CD4-positive, alpha-beta memory T cell (primary cell): ENCODE measurements at regions of chr22 and their contacts with region 1.

Region 1: DNA sequence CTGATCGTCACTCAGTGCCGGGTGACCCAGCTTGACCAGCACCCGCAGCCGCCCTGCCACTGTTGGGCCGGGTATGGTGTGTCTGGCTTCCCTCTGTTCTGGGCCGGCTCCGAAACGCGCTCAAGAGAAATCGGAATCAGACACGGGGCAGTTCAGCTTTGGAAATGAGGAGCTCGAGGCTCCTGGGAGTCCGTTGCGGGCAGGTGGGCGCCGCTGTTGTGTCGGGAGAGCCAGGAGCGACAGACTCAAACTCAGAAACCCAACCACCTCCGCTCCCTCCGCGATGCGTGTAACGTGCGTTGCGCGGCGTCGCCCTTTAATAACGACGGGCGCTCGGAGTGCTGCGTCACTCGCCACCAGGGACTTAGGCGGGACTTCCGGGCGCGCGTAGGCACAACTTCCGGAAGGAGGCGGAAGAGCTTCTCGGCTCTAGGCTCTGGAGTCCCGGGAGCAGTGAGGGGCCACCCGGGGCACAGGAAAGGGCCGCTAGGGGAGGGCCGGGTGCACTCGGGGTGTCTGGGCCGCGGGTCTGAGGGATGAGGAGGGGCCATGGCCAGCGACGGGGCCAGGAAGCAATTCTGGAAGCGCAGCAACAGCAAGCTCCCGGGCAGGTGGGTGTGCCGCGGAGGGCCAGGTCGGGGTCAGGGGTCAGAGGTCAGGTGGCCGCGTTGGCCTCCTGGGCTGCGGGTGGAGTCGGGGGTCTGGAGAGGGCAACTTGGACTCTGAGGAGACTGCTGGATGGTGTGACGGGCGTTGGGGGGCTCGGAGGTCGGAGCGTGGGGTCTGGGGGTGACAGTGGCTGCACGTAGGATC is at the start of gene TBC1D22A:
- DNase-seq: peak; percentile 91 to 94 (median 93)
- H3K4me3 ChIP-seq: peak within 1 kb of the TSS; percentile 94 to 96
- H3K4me3 Mint-ChIP-seq: peak within 1 kb of the TSS; percentile 98 to 100 (median 99)
- H3K27ac ChIP-seq: peak within 1 kb of the TSS; percentile 99
- H3K27ac Mint-ChIP-seq: peak within 1 kb of the TSS; percentile 99 to 100 (median 100)
- H3K4me1 ChIP-seq: peaks cover 51% of the 10 kb centered on the region
- H3K4me1 Mint-ChIP-seq: peaks cover 38 to 76% (median 53%) of the 10 kb centered on the region in 4 donors
- H3K27me3 ChIP-seq: no peaks in the 10 kb centered on the region
- H3K27me3 Mint-ChIP-seq: no peaks in the 10 kb centered on the region
- total RNA-seq, gene TBC1D22A: 49.0 to 49.2 TPM

Region 2: DNA sequence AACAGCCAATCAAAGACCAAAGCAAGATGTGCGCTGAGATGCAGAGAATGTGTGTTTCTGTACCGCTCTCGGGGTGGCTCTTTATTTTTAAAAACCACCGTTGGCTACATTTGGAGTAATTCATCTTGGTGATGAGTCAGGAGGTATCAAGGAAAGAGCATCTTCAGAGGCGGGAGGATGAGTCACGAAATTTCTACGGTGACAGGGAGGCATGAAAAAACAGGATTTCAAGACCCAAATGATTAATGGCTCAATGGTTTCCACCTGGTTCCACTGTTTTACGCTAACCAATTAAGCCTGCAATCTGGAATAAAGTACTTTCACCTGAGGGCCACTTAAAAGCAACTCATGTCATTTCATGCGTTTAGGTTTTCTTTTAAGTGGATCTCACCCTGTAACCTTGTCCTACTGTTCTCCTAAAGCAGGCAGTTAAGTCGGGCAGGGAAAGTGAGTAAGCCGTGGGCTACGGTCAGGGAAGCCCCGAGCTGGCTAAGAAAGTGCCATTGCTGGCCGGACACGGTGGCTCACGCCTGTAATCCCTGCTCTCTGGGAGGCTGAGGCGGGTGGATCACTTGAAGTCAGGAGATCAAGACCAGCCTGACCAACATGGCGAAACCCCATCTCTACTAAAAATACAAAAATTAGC is 299.6 kb before region 1 on chr22:
- CTCF ChIA-PET with region 1: no interaction called
- POLR2A ChIA-PET with region 1: no interaction called
- intact Hi-C with region 1: no loop called
- DNase-seq: no peak
- H3K4me3 ChIP-seq: no peak overlapping the region
- H3K4me3 Mint-ChIP-seq: no peak overlapping the region
- H3K27ac ChIP-seq: no peak overlapping the region
- H3K27ac Mint-ChIP-seq: peak overlapping the region in 1 of 7 donors; percentile 44
- H3K4me1 ChIP-seq: no peaks in the 10 kb centered on the region
- H3K4me1 Mint-ChIP-seq: no peaks in the 10 kb centered on the region
- H3K27me3 ChIP-seq: no peaks in the 10 kb centered on the region
- H3K27me3 Mint-ChIP-seq: peaks cover 3 to 6% of the 10 kb centered on the region in 2 donors

Region 3: DNA sequence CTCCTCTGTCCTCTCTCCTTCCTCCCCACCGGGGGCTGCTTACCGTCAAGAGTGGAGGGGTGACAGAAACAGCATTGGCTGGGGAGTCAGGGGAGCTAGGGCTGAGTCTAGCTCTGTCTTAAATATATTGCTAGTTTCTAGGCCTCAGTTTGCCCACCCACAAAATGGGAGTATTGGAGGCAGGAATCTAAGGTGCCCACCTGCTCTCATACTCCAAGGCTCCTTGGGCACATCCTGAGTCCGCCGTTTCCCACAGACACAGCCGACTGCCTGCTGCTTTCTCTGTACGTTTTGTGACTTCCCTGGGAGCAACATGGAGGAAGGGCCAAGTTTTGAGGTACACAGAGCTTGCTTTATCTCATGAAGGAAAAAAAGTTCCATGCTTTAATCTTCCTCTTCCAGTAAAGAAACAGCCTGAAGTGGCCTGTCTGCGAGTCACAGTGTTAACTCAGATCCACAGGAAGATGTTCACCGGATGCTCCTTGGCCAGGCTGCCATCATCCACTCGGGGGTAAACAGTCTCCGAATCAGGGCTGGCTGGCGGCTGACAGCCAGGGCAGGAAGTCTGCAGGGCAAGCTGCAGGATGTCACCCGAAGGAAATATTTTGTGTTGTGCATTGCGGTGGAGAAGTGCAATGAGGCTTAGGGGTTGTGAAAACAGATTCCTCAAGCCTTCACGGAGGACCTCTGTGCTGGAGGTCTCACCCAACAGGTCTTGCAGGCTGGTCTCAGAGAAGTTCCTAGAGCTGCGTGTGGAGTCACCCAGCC is 13.4 kb before region 1 on chr22:
- CTCF ChIA-PET with region 1: interaction called, 61 read pairs
- POLR2A ChIA-PET with region 1: interaction called, 100 read pairs
- intact Hi-C with region 1: no loop called
- DNase-seq: peak; percentile 68 to 82 (median 71)
- H3K4me3 ChIP-seq: peak overlapping the region; percentile 23 to 39
- H3K4me3 Mint-ChIP-seq: peak overlapping the region; percentile 75 to 89 (median 82)
- H3K27ac ChIP-seq: peak overlapping the region; percentile 56
- H3K27ac Mint-ChIP-seq: peak overlapping the region; percentile 96 to 99 (median 96)
- H3K4me1 ChIP-seq: peaks cover 37% of the 10 kb centered on the region
- H3K4me1 Mint-ChIP-seq: peaks cover 17 to 26% (median 23%) of the 10 kb centered on the region in 4 donors
- H3K27me3 ChIP-seq: no peaks in the 10 kb centered on the region
- H3K27me3 Mint-ChIP-seq: no peaks in the 10 kb centered on the region

Region 4: DNA sequence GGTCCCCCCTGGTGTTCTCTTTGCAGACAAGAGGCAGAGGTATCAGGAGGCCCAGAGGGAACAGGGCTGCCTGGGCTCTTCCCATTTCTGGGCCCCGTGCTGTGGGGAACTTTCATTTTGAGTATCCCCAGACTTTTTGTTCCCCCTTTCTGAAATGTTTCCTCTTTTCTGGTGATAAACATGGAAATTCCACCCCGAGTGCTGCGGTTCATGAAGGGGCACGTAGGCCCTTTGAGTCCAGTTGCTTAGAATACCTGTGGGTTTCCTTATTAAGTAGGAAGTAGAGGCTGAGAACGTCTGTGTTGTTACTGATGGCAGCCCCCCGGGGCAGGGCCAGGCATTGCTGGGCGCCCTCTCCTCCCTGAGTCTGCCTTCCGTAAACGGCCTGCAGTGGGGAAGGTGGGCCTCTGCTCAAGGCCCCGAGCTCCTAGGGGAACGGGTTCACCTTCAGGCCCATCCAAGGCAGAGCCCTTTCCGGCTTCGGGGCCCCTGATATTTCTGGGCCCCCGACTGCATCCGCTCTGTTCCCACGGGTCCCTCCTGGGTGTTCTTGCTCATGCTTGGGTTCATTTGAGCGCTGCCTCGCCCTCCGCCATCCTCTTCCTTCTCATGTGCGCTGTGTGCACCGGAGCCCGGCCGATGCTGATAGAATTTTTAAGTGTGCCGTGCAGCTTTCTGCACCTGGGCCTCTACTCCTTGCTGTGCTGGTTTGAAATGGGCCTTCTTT is 12.0 kb after region 1 on chr22:
- CTCF ChIA-PET with region 1: interaction called, 19 read pairs
- POLR2A ChIA-PET with region 1: interaction called, 51 read pairs
- intact Hi-C with region 1: no loop called
- DNase-seq: peak in 3 of 5 donors; percentile 34 to 50 (median 34)
- H3K4me3 ChIP-seq: peak overlapping the region in 1 of 2 donors; percentile 32
- H3K4me3 Mint-ChIP-seq: peak overlapping the region; percentile 62 to 87 (median 76)
- H3K27ac ChIP-seq: peak overlapping the region; percentile 73
- H3K27ac Mint-ChIP-seq: peak overlapping the region; percentile 91 to 98 (median 93)
- H3K4me1 ChIP-seq: peaks cover 80% of the 10 kb centered on the region
- H3K4me1 Mint-ChIP-seq: peaks cover 57 to 83% (median 74%) of the 10 kb centered on the region in 4 donors
- H3K27me3 ChIP-seq: no peaks in the 10 kb centered on the region
- H3K27me3 Mint-ChIP-seq: no peaks in the 10 kb centered on the region

Region 5: DNA sequence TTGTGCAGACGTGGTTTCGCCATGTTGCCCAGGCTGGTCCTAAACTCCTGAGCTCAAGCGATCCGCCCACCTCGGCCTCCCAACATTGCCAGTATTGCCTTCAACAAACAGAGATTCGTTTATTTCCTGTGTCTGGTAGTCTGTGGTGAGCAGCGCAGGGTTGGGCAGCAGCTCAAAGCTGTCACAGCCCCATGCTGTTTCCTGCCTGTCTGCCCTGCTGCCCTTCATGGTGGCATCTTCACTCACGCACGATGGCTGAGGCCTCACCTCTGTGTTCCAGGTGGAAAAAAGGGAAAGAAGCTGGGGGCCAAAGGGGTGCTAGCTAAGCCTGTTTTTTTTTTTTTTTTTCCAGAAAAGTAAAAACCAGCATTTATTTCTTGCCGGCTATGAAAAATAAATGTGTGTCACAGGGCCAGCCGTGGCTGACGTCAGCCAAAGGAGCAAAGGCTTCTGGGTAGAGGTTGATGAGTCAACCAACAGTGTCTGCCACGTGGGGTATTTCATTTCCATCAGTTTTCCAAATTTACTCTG is 28.8 kb after region 1 on chr22:
- CTCF ChIA-PET with region 1: interaction called, 56 read pairs
- POLR2A ChIA-PET with region 1: interaction called, 90 read pairs
- intact Hi-C with region 1: loop called (anchors 1 kb)
- DNase-seq: peak; percentile 83 to 96 (median 87)
- H3K4me3 ChIP-seq: peak overlapping the region in 1 of 2 donors; percentile 45
- H3K4me3 Mint-ChIP-seq: peak overlapping the region; percentile 80 to 91 (median 86)
- H3K27ac ChIP-seq: peak overlapping the region; percentile 87
- H3K27ac Mint-ChIP-seq: peak overlapping the region; percentile 99 to 100 (median 100)
- H3K4me1 ChIP-seq: peaks cover 56% of the 10 kb centered on the region
- H3K4me1 Mint-ChIP-seq: peaks cover 33 to 61% (median 43%) of the 10 kb centered on the region in 4 donors
- H3K27me3 ChIP-seq: no peaks in the 10 kb centered on the region
- H3K27me3 Mint-ChIP-seq: no peaks in the 10 kb centered on the region

Region 6: GRCh38 chr22:47065756-47066615 is 303.5 kb after region 1 on chr22:
- CTCF ChIA-PET with region 1: no interaction called
- POLR2A ChIA-PET with region 1: no interaction called
- intact Hi-C with region 1: no loop called
- DNase-seq: no peak
- H3K4me3 ChIP-seq: no peak overlapping the region
- H3K4me3 Mint-ChIP-seq: peak overlapping the region in 1 of 8 donors; percentile 9
- H3K27ac ChIP-seq: no peak overlapping the region
- H3K27ac Mint-ChIP-seq: no peak overlapping the region
- H3K4me1 ChIP-seq: peaks cover 12% of the 10 kb centered on the region
- H3K4me1 Mint-ChIP-seq: peaks cover 16 to 49% (median 24%) of the 10 kb centered on the region in 4 donors
- H3K27me3 ChIP-seq: no peaks in the 10 kb centered on the region
- H3K27me3 Mint-ChIP-seq: no peaks in the 10 kb centered on the region